ENCODE measurements at regions of chr18 and their contacts with region 1.

Region 1: GRCh38 chr18:74353169-74353775 is 37.6 kb downstream of the C18orf63 start:
- DNase-seq: peak; percentile 62
- ATAC-seq: peak; percentile 91 to 93

Region 2: GRCh38 chr18:74126684-74127482 is 226.4 kb before region 1 on chr18:
- intact Hi-C with region 1: no loop called
- DNase-seq: no peak
- ATAC-seq: no peak

Region 3: DNA sequence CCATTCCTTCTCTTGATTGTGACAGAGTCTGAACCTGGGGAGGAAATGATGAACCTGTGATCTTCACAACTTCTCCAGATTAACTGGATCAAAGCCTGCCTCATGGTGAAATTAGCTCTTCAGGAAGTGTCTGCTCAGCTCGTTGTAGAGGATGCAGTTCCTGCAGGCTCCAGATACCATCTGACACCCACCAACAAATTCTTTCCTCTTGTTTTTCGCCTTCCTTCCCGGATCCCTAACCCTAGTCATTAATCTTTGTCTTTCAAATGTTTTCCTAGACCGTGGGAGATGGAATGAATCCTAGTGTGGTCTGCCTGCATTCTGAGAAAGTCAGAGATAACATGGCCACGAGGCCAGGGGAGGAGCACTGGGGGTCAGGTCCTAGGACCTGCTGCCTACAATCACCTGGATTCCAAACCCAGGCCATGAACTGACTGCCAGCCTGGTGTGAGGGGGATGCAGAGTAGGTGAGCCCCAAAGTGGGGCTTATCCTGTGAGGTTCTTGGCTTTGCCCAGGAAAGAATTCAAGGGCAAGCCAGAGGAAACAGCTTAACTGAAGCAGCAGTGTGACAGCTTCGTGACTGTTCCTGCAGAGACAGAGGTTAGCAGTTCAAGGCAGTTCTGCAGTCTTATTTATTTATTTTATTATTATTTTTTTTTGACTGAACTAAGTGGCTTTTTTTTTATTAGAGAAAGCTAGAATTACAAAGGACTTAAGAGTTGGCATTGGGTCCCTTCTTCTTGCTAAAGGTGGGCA is 36.1 kb after region 1 on chr18:
- intact Hi-C with region 1: no loop called
- DNase-seq: no peak
- ATAC-seq: peak in 1 of 2 donors; percentile 29

Region 4: GRCh38 chr18:74476140-74476539 is 122.9 kb after region 1 on chr18:
- intact Hi-C with region 1: loop called (anchors 1 to 5 kb)
- DNase-seq: peak; percentile 43
- ATAC-seq: peak in 1 of 2 donors; percentile 26

Region 5: GRCh38 chr18:74551936-74552555 is 198.8 kb after region 1 on chr18:
- intact Hi-C with region 1: loop called (anchors 2 to 10 kb)
- DNase-seq: peak; percentile 86
- ATAC-seq: peak; percentile 95 to 96